Caco-2 (cell line): ENCODE measurements at regions of chr12 and their contacts with region 1.

Region 1: DNA sequence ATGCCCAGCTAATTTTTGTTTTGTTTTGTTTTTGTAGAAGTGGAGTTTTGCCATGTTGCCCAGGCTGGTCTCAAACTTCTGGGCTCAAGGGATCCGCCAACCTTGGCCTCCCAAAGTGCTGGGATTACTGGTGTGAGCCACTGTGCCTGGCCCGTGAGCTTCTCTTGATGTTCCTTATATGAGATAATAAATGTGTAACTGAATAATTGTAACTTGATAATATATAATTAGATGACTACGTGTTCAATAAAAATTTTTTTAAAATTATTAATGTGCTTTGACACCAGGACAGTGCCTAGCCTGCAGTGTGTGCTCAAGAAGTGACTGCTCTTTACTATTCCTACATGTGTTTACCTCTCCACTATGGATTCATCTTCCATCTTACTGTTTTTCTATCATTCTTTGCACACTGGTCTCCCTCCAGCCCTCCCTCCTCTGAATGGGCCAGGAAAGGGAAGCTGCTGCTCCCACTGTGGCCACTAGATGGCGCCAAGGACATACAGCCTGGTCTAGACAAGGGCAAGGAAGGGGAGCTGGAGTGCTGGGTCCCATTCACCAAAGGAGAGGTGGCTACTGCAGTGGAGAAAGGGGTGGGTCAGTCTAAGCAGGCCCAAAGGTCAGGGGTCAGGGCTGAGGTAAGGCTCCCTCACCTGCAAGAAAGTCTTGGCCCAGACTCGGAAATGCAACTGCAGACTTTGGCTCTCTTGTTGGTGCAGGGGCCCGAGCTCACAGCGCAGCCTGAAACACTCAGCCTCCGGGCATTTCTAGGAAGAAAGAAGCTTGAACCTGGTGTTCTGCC is 14.7 kb upstream of the ZNF385A start:
- DNase-seq: peak; percentile 85 to 89
- H3K4me3 ChIP-seq: no peak overlapping the region
- H3K4me3 Mint-ChIP-seq: no peak overlapping the region
- H3K27ac Mint-ChIP-seq: no peak overlapping the region
- H3K4me1 ChIP-seq: no peaks in the 10 kb centered on the region
- H3K4me1 Mint-ChIP-seq: peaks cover 6% of the 10 kb centered on the region
- H3K27me3 ChIP-seq: no peaks in the 10 kb centered on the region
- H3K27me3 Mint-ChIP-seq: no peaks in the 10 kb centered on the region
- CTCF ChIP-seq: peak; percentile 96 to 99

Region 2: DNA sequence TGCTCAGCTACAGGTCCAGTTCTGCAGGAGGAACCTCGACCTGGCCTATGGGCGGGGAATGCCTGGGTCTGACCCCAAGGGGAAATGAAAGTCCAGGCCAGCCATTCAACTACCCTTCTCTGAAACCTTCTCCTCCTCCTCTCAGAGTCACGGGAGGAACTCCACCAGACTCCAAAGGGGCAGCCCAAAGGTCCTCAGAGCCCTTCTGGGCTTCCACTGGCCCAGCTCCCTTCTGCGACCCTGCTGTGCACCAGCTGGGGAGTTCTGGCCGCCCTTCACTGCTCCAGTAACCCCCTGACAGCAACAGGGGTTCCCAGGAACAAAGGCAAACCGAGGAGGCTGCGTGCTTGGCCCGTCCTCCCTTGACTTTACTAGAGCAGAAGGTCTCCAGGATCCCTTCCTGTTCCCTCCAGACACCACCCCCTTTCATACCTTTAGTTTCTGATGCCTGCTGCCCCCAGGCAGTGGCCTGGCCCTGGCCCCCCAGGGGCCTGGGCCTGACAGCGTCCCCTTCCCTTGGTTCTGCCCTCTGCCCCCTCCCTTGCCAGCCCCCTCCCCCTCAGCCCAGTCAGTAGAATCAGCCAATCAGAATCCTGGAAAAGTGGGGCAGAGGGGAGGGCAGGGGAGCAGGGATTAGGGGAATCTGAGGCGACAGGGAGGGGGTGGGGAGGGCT is 13.8 kb before region 1 on chr12:
- CTCF ChIA-PET with region 1: interaction called, 18 read pairs
- POLR2A ChIA-PET with region 1: no interaction called
- intact Hi-C with region 1: no loop called
- DNase-seq: no peak
- H3K4me3 ChIP-seq: no peak overlapping the region
- H3K4me3 Mint-ChIP-seq: no peak overlapping the region
- H3K27ac Mint-ChIP-seq: no peak overlapping the region
- H3K4me1 ChIP-seq: peaks cover 34% of the 10 kb centered on the region
- H3K4me1 Mint-ChIP-seq: peaks cover 22% of the 10 kb centered on the region
- H3K27me3 ChIP-seq: no peaks in the 10 kb centered on the region
- H3K27me3 Mint-ChIP-seq: no peaks in the 10 kb centered on the region
- CTCF ChIP-seq: no peak

Region 3: GRCh38 chr12:54409267-54409666 is 10.1 kb after region 1 on chr12:
- CTCF ChIA-PET with region 1: interaction called, 11 read pairs
- POLR2A ChIA-PET with region 1: no interaction called
- intact Hi-C with region 1: no loop called
- DNase-seq: no peak
- H3K4me3 ChIP-seq: no peak overlapping the region
- H3K4me3 Mint-ChIP-seq: no peak overlapping the region
- H3K27ac Mint-ChIP-seq: no peak overlapping the region
- H3K4me1 ChIP-seq: no peaks in the 10 kb centered on the region
- H3K4me1 Mint-ChIP-seq: no peaks in the 10 kb centered on the region
- H3K27me3 ChIP-seq: no peaks in the 10 kb centered on the region
- H3K27me3 Mint-ChIP-seq: no peaks in the 10 kb centered on the region
- CTCF ChIP-seq: no peak

Region 4: DNA sequence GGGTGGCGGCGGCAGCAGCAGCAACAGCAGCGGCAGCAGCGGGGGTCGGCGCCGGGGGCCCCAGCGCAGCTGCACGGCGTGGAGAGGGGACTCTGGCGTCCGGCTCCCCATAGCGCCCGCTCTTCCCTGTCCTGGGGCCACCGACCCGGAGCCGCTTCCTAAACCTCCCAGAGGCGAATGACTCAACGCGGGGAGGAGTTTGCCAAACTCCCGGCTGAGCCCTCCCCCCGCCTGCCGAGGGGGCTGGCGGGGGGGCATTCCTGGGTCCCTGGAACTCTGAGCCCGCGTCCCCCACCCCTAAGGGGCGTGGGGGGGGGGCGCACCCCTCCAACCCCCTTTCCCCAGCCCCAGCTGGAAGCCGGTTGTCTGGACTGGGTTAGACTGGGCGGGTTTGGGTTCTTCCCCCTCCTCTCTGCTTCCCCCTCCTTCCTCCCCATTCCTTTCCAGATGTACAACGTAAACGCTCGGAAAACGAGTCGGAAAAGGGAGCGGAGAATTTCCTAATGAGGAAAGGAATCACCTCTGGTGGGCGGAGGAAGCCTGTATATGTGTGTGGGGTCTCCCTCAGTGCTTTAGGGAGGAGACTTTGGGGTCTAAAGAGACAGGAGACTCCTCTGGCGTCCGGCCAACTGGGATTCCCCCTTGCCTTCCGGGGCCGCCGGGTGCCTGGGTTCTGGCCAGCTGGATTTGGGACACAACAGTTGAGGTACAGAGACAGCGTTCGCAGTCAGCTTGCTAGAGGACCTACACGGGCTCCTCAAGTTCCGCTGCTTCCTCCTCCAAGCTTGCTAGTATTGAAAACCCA is 20.1 kb after region 1 on chr12 and contains the start of gene ITGA5:
- CTCF ChIA-PET with region 1: interaction called, 12 read pairs
- POLR2A ChIA-PET with region 1: no interaction called
- intact Hi-C with region 1: no loop called
- DNase-seq: peak; percentile 57 to 64
- H3K4me3 ChIP-seq: peak within 1 kb of the TSS; percentile 67
- H3K4me3 Mint-ChIP-seq: peak within 1 kb of the TSS; percentile 96
- H3K27ac Mint-ChIP-seq: peak within 1 kb of the TSS; percentile 77
- H3K4me1 ChIP-seq: peaks cover 5% of the 10 kb centered on the region; the same call in 1 of the 2 replicates
- H3K4me1 Mint-ChIP-seq: peaks cover 10% of the 10 kb centered on the region
- H3K27me3 ChIP-seq: no peaks in the 10 kb centered on the region
- H3K27me3 Mint-ChIP-seq: no peaks in the 10 kb centered on the region
- CTCF ChIP-seq: no peak
- total RNA-seq, gene ITGA5: 17.3 and 22.3 TPM in 2 replicates

Region 5: DNA sequence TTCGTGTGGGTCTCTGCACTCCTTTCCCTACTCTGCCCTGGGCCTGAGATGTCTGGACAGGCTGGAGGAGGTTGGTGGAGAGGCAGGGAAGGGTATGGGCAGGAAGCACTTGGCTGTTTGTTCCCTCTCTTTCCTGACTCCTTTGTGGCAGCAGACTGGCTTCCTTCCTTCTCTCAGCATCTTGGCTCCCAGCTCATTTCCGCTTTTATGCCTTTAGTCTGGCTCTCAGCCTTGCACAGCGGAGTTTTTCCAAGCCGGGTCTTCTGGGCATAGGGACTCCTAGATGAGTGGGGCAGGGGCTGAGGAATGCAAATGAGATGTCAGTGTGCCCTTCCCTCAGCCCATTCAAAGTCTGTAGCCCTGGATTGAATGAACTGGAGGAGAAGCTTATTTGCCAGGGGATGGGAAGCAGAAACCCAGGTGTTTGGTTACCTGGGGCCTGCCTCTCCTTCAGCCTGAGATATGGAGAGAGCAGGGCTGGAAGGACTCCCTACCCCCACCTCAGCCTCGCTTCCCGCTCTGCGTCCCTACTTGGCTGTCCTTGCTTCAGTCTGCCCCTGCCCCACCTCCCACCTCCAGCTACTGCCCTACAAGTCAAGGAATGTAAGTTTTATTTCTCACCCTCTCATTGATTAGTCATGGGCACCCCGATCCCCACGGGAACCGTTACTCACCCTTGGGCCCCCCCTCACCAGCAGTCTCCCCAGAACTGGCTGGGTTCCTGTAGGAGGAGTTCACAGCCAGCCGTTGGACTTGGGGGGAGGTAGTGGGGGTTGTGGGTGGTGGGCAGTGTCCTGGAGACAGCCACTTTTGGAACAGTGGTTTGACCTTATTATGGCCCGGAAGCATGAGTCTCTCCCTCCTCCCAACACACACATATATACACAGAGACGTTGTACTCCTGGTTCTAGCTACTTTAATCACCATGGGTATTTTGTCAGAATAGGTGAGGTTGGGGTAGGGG is 29.1 kb after region 1 on chr12:
- CTCF ChIA-PET with region 1: interaction called, 10 read pairs
- POLR2A ChIA-PET with region 1: no interaction called
- intact Hi-C with region 1: no loop called
- DNase-seq: no peak
- H3K4me3 ChIP-seq: no peak overlapping the region
- H3K4me3 Mint-ChIP-seq: no peak overlapping the region
- H3K27ac Mint-ChIP-seq: no peak overlapping the region
- H3K4me1 ChIP-seq: peaks cover 7% of the 10 kb centered on the region; the same call in 1 of the 2 replicates
- H3K4me1 Mint-ChIP-seq: peaks cover 10% of the 10 kb centered on the region
- H3K27me3 ChIP-seq: no peaks in the 10 kb centered on the region
- H3K27me3 Mint-ChIP-seq: peaks cover 3% of the 10 kb centered on the region
- CTCF ChIP-seq: no peak

Region 6: DNA sequence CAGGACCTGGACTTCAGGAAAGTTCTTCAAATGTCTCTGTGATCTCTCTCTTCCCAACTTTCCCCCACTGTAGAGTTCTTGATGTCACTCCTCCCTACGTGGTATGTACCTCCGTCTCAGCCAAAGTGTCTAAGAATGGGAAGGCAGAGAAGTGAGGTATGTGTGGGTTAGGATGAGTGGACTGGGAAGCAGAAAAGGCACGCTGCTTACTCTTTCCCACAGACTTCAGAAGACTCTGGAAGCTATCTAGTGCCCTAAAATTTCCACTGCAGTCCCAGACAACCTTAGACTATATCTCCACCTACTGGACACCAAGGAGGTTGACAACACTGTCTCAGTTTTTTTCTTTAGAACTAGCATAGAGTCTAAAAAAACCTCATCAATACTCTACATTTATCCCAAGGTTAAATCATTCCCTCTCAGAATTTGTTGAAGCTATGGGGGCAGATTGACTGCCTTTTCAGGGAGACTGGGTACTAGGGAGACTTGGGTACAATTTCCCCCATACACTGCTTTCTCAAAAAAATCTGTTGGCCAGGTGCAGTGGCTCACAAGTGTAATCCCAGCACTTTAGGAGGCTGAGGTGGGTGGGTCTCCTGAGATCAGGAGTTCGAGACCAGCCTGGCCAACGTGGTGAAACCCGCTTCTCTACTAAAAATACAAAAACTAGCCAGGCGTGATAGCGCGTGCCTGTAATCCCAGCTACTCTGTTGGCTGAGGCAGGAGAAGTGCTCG is 40.5 kb after region 1 on chr12:
- CTCF ChIA-PET with region 1: interaction called, 142 read pairs
- POLR2A ChIA-PET with region 1: no interaction called
- intact Hi-C with region 1: loop called (anchors 1 kb)
- DNase-seq: peak in 1 of 2 experiments; percentile 35
- H3K4me3 ChIP-seq: no peak overlapping the region
- H3K4me3 Mint-ChIP-seq: no peak overlapping the region
- H3K27ac Mint-ChIP-seq: no peak overlapping the region
- H3K4me1 ChIP-seq: no peaks in the 10 kb centered on the region
- H3K4me1 Mint-ChIP-seq: no peaks in the 10 kb centered on the region
- H3K27me3 ChIP-seq: no peaks in the 10 kb centered on the region
- H3K27me3 Mint-ChIP-seq: no peaks in the 10 kb centered on the region
- CTCF ChIP-seq: peak; percentile 76 to 81

Region 7: GRCh38 chr12:54588110-54588889 is 189.1 kb after region 1 on chr12 and contains the start of gene PPP1R1A:
- CTCF ChIA-PET with region 1: no interaction called
- POLR2A ChIA-PET with region 1: no interaction called
- intact Hi-C with region 1: no loop called
- DNase-seq: peak in 1 of 2 experiments; percentile 33
- H3K4me3 ChIP-seq: peak within 1 kb of the TSS; percentile 43
- H3K4me3 Mint-ChIP-seq: peak within 1 kb of the TSS; percentile 48
- H3K27ac Mint-ChIP-seq: no peak within 1 kb of the TSS
- H3K4me1 ChIP-seq: no peaks in the 10 kb centered on the region
- H3K4me1 Mint-ChIP-seq: peaks cover 11% of the 10 kb centered on the region
- H3K27me3 ChIP-seq: peaks cover 2% of the 10 kb centered on the region
- H3K27me3 Mint-ChIP-seq: peaks cover 38% of the 10 kb centered on the region
- CTCF ChIP-seq: no peak
- total RNA-seq, gene PPP1R1A: 0.43 TPM in 1 of 2 replicates, not detected in the other

Region 8: GRCh38 chr12:54658306-54659264 is 259.4 kb after region 1 on chr12:
- CTCF ChIA-PET with region 1: no interaction called
- POLR2A ChIA-PET with region 1: no interaction called
- intact Hi-C with region 1: no loop called
- DNase-seq: peak; percentile 65 to 68
- H3K4me3 ChIP-seq: no peak overlapping the region
- H3K4me3 Mint-ChIP-seq: no peak overlapping the region
- H3K27ac Mint-ChIP-seq: no peak overlapping the region
- H3K4me1 ChIP-seq: no peaks in the 10 kb centered on the region
- H3K4me1 Mint-ChIP-seq: no peaks in the 10 kb centered on the region
- H3K27me3 ChIP-seq: no peaks in the 10 kb centered on the region; the same call in 1 of the 2 replicates
- H3K27me3 Mint-ChIP-seq: peaks cover 16% of the 10 kb centered on the region
- CTCF ChIP-seq: peak; percentile 55 to 72